Activated CD4-positive, alpha-beta memory T cell treated with anti-CD3 and anti-CD28 coated beads for 36 hours (primary cell): ENCODE measurements at regions of chr3 and their contacts with region 1.

Region 1: GRCh38 chr3:131502530-131503245 is at the start of gene MRPL3:
- DNase-seq: peak; percentile 91
- H3K4me3 Mint-ChIP-seq: peak within 1 kb of the TSS; percentile 99
- H3K27ac Mint-ChIP-seq: peak within 1 kb of the TSS; percentile 90
- H3K4me1 Mint-ChIP-seq: peaks cover 32% of the 10 kb centered on the region
- H3K27me3 Mint-ChIP-seq: no peaks in the 10 kb centered on the region
- total RNA-seq, gene MRPL3: 145 to 146 TPM

Region 2: GRCh38 chr3:131314318-131314717 is 188.4 kb before region 1 on chr3:
- CTCF ChIA-PET with region 1: no interaction called
- POLR2A ChIA-PET with region 1: no interaction called
- intact Hi-C with region 1: no loop called
- DNase-seq: no peak
- H3K4me3 Mint-ChIP-seq: no peak overlapping the region
- H3K27ac Mint-ChIP-seq: no peak overlapping the region
- H3K4me1 Mint-ChIP-seq: no peaks in the 10 kb centered on the region
- H3K27me3 Mint-ChIP-seq: peaks cover 4% of the 10 kb centered on the region

Region 3: DNA sequence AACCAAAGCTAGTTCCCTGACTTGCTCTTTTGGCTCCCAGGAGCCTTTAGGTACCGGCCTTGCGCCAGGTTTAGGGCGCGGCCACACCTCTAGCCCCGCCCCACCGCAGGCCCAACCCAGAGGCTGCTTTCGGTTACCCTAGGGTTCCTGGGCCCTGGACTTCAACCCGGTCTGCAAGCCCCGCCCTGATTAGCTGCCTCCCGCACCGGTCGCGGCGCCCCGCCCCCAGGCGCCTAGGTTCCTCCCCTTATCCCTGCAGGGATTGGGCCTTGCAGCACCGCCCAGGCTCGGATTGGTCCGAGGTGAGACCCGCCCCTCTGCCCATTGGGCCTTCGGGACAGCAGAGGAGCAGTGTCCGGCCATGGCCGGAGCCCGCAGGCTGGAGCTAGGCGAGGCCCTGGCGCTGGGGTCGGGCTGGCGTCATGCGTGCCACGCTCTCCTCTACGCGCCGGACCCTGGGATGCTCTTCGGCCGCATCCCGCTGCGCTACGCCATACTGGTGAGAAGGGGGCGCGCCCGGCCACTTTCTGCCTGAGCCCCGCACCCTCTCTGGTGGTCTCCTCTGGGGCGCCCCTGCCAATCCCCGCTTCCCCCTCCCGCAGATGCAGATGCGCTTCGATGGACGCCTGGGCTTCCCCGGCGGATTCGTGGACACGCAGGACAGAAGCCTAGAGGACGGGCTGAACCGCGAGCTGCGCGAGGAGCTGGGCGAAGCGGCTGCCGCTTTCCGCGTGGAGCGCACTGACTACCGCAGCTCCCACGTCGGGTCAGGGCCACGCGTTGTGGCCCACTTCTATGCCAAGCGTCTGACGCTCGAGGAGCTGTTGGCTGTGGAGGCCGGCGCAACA is 121.0 kb before region 1 on chr3 and contains the start of gene NUDT16:
- CTCF ChIA-PET with region 1: no interaction called
- POLR2A ChIA-PET with region 1: no interaction called
- intact Hi-C with region 1: loop called (anchors 1 kb)
- DNase-seq: peak; percentile 99
- H3K4me3 Mint-ChIP-seq: peak within 1 kb of the TSS; percentile 93
- H3K27ac Mint-ChIP-seq: peak within 1 kb of the TSS; percentile 84
- H3K4me1 Mint-ChIP-seq: peaks cover 22% of the 10 kb centered on the region
- H3K27me3 Mint-ChIP-seq: no peaks in the 10 kb centered on the region
- total RNA-seq, gene NUDT16: 7.4 to 8.6 TPM

Region 4: GRCh38 chr3:131491775-131492174 is 10.9 kb before region 1 on chr3:
- CTCF ChIA-PET with region 1: no interaction called
- POLR2A ChIA-PET with region 1: no interaction called
- intact Hi-C with region 1: loop called (anchors 1 kb)
- DNase-seq: no peak
- H3K4me3 Mint-ChIP-seq: no peak overlapping the region
- H3K27ac Mint-ChIP-seq: no peak overlapping the region
- H3K4me1 Mint-ChIP-seq: peaks cover 25% of the 10 kb centered on the region
- H3K27me3 Mint-ChIP-seq: no peaks in the 10 kb centered on the region